ENCODE measurements at regions of chr1 and their contacts with region 1.

Region 1: DNA sequence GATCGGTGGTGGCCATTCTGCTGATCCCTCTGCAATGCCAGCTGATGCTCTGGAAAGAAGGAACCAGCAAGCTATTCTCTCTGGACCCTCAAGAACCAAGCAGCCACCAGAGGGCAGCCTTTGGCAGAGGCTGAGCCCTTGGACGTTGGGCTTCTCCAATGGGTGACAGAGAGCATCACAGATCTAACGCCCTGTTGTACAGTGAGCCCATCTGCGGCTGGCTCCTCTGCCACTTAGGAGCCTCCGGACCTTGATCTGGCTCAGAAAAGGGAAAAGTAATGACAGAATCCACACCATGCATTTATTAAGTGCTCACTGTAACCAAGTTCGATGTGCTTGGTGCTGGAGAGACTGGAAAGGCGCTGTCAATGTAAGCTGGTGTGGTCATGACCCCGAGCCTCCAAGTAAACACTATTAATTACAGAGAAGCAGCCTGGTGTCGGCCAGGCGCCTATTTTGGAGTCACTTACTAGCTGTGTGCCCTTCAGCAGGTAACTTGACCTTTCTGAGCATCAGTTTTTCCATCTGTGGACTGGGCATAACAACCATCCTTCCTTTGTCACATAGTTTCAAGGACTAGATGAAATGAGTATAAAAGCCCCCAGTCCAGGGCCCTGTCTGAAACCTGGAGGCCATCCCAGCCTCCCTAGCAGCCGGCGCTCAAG is 34.9 kb downstream of the ECE1 start:
- DNase-seq: peak; percentile 84 to 88 (median 86)
- ATAC-seq: peak; percentile 66 to 71 (median 68)
- H3K4me3 ChIP-seq: no peak overlapping the region
- H3K27ac ChIP-seq: no peak overlapping the region
- H3K4me1 ChIP-seq: peaks cover 0 to 44% (median 22%) of the 10 kb centered on the region in 4 donors
- H3K27me3 ChIP-seq: no peaks in the 10 kb centered on the region
- CTCF ChIP-seq: peak; percentile 83 to 90 (median 84)
- POLR2A ChIP-seq: no peak

Region 2: DNA sequence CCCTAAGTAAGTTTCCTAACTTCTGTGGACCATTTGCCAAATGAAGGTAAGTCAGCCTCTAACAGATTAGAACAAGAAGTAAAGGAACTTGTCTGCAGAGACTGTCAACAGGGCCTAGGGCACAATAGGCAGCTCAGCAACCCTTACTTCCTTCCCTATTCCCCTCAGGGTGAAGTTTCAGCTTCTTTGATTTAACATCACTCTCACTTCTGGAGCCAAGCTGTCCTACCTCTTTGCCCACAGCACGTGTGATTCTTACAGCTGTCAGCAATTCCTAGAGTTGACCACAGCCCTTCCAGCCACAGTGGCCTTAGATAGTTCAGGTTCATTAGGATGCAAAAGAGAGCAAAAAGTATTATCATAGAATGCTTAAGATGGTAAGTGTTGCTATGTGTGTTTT is 71.1 kb before region 1 on chr1:
- intact Hi-C with region 1: no loop called
- DNase-seq: no peak
- ATAC-seq: peak; percentile 41 to 74 (median 46)
- H3K4me3 ChIP-seq: no peak overlapping the region
- H3K27ac ChIP-seq: no peak overlapping the region
- H3K4me1 ChIP-seq: no peaks in the 10 kb centered on the region
- H3K27me3 ChIP-seq: no peaks in the 10 kb centered on the region
- CTCF ChIP-seq: no peak
- POLR2A ChIP-seq: no peak

Region 3: GRCh38 chr1:21200767-21201166 is 54.6 kb before region 1 on chr1:
- intact Hi-C with region 1: no loop called
- DNase-seq: no peak
- ATAC-seq: no peak
- H3K4me3 ChIP-seq: no peak overlapping the region
- H3K27ac ChIP-seq: no peak overlapping the region
- H3K4me1 ChIP-seq: no peaks in the 10 kb centered on the region
- H3K27me3 ChIP-seq: no peaks in the 10 kb centered on the region
- CTCF ChIP-seq: no peak
- POLR2A ChIP-seq: no peak

Region 4: GRCh38 chr1:21344750-21345443 is 89.5 kb after region 1 on chr1:
- intact Hi-C with region 1: loop called in 1 of 2 experiments (anchors 5 kb)
- DNase-seq: peak in 2 of 3 donors; percentile 54 to 69
- ATAC-seq: peak; percentile 2 to 30 (median 16)
- H3K4me3 ChIP-seq: peak overlapping the region; percentile 67 to 86 (median 74)
- H3K27ac ChIP-seq: peak overlapping the region; percentile 78 to 97 (median 87)
- H3K4me1 ChIP-seq: peaks cover 0 to 60% (median 18%) of the 10 kb centered on the region in 4 donors
- H3K27me3 ChIP-seq: no peaks in the 10 kb centered on the region
- CTCF ChIP-seq: no peak
- POLR2A ChIP-seq: no peak

Region 5: DNA sequence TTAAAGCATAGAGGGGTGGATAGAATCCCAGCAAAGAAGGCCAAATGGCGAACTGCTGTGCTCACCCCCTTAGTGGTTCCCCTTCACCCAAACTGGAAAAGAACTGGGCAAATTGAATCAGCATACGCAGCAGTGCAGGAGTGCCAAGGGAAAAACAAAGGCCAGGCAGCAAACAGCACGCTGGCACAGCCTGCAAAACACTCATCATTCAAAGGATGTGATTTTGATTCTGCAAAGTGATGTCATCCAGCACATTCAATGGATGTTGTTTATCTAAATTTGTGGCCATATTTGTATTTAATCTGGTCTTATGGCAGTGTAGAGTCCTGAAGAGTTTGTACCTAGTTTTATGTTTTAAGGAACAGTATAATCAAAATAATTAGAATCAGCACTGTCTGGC is 106.7 kb after region 1 on chr1:
- intact Hi-C with region 1: loop called in 1 of 2 experiments (anchors 5 kb)
- DNase-seq: no peak
- ATAC-seq: no peak
- H3K4me3 ChIP-seq: no peak overlapping the region
- H3K27ac ChIP-seq: no peak overlapping the region
- H3K4me1 ChIP-seq: no peaks in the 10 kb centered on the region
- H3K27me3 ChIP-seq: no peaks in the 10 kb centered on the region
- CTCF ChIP-seq: no peak
- POLR2A ChIP-seq: no peak

Measured in right lobe of liver (tissue), 6 donors.